T-cell (primary cell): ENCODE measurements at regions of chr22 and their contacts with region 1.

Region 1: DNA sequence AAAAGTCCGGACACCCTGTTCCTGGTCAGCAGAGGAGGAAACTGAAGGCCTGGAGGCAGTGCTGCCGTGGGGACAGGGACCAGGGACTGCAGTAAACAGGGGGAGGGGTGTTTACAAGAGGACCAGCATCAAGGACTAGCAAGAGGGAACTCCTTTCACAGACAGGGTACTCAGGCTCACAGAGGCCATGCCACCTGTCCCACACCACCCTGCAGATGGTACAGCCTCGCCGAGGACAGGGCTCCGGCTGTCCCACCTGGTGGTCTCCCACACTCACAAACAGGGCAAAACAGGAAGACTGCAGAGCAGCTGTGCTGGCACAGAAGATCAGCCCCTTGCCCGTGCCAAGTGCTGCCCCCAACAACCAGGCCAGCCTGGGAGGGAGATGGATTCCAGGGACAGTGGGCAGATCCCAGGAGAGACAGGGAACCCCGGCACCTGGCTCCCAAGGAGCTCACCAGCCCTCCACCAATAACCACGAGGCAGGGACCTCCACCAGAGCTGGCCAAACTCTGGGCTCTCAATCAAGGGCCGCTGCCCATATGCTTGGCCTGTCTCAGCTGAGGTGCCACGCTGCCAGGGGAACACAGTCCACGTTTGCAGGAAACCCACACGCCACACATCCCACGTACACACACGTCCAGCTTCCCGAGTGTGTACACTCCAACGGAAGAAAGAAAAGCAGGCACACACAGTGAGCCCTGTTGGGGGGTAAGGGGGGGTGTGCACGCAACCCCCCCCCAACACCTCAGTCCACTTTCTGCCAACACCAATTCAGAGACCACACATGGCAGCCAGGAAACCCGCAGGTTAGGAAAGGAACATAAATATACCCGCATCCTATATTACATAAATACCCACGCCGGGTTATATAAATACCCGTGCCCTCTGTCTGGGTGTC is 2.1 kb downstream of the CSNK1E start:
- DNase-seq: peak in 2 of 35 experiments; percentile 32 to 54
- ATAC-seq: peak in 3 of 4 experiments; percentile 7 to 17 (median 11)
- H3K4me3 ChIP-seq: peak overlapping the region in 1 of 2 donors; percentile 38
- H3K4me3 Mint-ChIP-seq: peak overlapping the region; percentile 81 to 86 (median 82)
- H3K27ac ChIP-seq: peak overlapping the region; percentile 76
- H3K27ac Mint-ChIP-seq: peak overlapping the region; percentile 95 to 96
- H3K4me1 ChIP-seq: peaks cover 2 to 64% of the 10 kb centered on the region in 2 experiments
- H3K4me1 Mint-ChIP-seq: peaks cover 59 to 61% (median 61%) of the 10 kb centered on the region in 3 donors
- H3K27me3 ChIP-seq: no peaks in the 10 kb centered on the region
- H3K27me3 Mint-ChIP-seq: no peaks in the 10 kb centered on the region

Region 2: DNA sequence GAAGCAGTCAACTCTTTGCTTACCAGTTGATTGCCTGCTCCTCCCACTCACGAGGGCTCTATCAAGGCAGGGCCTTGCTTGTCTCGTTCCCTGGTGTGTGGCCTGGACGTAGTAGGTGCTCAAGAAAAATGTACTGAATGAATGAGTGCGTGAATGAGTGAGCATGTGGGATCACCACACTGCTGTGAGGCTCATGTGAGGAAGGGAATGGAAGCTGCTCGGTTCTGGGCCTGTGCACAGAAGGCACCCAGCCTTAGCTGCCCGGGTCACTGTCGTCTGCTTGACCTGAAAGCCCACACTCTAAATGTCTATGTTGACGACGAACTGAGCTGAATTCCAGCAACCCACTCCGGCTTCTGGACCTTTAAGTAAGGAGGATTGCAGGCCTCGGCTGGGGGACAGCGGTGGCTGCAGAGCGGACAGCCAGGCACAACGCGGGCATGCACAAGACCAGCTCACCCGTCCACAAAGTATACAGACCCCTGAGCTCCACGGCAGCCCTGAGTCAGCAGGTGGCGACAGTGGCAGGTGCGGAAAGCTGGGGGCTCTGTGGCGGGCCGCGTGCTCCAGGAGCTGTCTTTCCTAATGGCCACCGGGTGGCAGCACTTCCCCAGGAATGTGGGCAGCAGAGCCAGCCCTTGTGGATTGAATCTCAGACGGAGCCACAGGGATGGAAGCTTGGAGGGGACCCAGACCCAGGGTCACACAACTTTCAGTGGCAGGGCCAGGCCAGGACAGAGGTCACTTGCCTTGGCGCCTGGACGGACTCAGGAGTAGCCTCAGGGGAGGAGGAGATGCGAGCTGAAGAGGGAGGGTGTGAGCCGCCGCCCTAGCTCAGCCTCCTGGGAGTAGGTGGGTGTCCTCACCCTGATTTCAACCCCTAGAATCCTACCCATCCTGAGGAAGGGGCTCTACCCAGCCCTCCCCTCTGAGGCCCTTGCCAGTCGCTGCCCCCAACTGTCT is 263.0 kb before region 1 on chr22:
- CTCF ChIA-PET with region 1: no interaction called
- POLR2A ChIA-PET with region 1: interaction called in 1 of 2 experiments, 10 read pairs
- DNase-seq: peak; percentile 50 to 90 (median 73)
- ATAC-seq: peak; percentile 74 to 86 (median 79)
- H3K4me3 ChIP-seq: no peak overlapping the region
- H3K4me3 Mint-ChIP-seq: no peak overlapping the region
- H3K27ac ChIP-seq: no peak overlapping the region
- H3K27ac Mint-ChIP-seq: no peak overlapping the region
- H3K4me1 ChIP-seq: peaks cover 0 to 22% of the 10 kb centered on the region in 2 experiments
- H3K4me1 Mint-ChIP-seq: peaks cover 9 to 10% (median 10%) of the 10 kb centered on the region in 3 donors
- H3K27me3 ChIP-seq: peaks cover 0 to 23% of the 10 kb centered on the region in 2 experiments
- H3K27me3 Mint-ChIP-seq: peaks cover 0 to 3% of the 10 kb centered on the region in 2 donors